ENCODE measurements at regions of chr1 and their contacts with region 1.

Region 1: GRCh38 chr1:111214074-111214801 is 13.3 kb upstream of the CHI3L2 start:
- DNase-seq: peak; percentile 81
- ATAC-seq: peak; percentile 23
- H3K4me3 ChIP-seq: no peak overlapping the region
- H3K27ac ChIP-seq: peak overlapping the region; percentile 100
- H3K4me1 ChIP-seq: peaks cover 62% of the 10 kb centered on the region
- H3K27me3 ChIP-seq: no peaks in the 10 kb centered on the region
- CTCF ChIP-seq: no peak
- EP300 ChIP-seq: no peak
- POLR2A ChIP-seq: no peak
- RAD21 ChIP-seq: 0 out of 2 replicates have a peak, but pooled peaks have one; percentile 1

Region 2: GRCh38 chr1:111127923-111128643 is 86.2 kb before region 1 on chr1:
- CTCF ChIA-PET with region 1: interaction called, 4 read pairs
- POLR2A ChIA-PET with region 1: interaction called, 11 read pairs
- RAD21 ChIA-PET with region 1: interaction called, 17 read pairs
- SMC1A ChIA-PET with region 1: interaction called, 21 read pairs
- in situ Hi-C with region 1: no loop called
- intact Hi-C with region 1: no loop called
- DNase-seq: peak; percentile 81
- ATAC-seq: peak; percentile 90
- H3K4me3 ChIP-seq: 0 out of 2 replicates have a peak overlapping the region, but pooled peaks have one; percentile 45
- H3K27ac ChIP-seq: peak overlapping the region; percentile 94
- H3K4me1 ChIP-seq: peaks cover 43% of the 10 kb centered on the region
- H3K27me3 ChIP-seq: no peaks in the 10 kb centered on the region
- CTCF ChIP-seq: no peak
- EP300 ChIP-seq: peak; percentile 26 to 54; a peak in 1 of 4 replicates
- POLR2A ChIP-seq: no peak
- RAD21 ChIP-seq: no peak

Region 3: GRCh38 chr1:111203681-111204200 is 10.5 kb before region 1 on chr1:
- CTCF ChIA-PET with region 1: interaction called, 239 read pairs
- POLR2A ChIA-PET with region 1: interaction called, 371 read pairs
- RAD21 ChIA-PET with region 1: interaction called, 542 read pairs
- SMC1A ChIA-PET with region 1: interaction called, 284 read pairs
- in situ Hi-C with region 1: no loop called
- intact Hi-C with region 1: loop called (anchors 1 kb)
- DNase-seq: peak; percentile 77
- ATAC-seq: peak; percentile 57
- H3K4me3 ChIP-seq: peak overlapping the region; percentile 87
- H3K27ac ChIP-seq: peak overlapping the region; percentile 92
- H3K4me1 ChIP-seq: peaks cover 39% of the 10 kb centered on the region
- H3K27me3 ChIP-seq: no peaks in the 10 kb centered on the region
- CTCF ChIP-seq: no peak
- EP300 ChIP-seq: peak; percentile 30 to 69; a peak in 3 of 4 replicates
- POLR2A ChIP-seq: peak; percentile 72; the same call in 1 of the 2 replicates
- RAD21 ChIP-seq: 0 out of 2 replicates have a peak, but pooled peaks have one; percentile 2

Region 4: DNA sequence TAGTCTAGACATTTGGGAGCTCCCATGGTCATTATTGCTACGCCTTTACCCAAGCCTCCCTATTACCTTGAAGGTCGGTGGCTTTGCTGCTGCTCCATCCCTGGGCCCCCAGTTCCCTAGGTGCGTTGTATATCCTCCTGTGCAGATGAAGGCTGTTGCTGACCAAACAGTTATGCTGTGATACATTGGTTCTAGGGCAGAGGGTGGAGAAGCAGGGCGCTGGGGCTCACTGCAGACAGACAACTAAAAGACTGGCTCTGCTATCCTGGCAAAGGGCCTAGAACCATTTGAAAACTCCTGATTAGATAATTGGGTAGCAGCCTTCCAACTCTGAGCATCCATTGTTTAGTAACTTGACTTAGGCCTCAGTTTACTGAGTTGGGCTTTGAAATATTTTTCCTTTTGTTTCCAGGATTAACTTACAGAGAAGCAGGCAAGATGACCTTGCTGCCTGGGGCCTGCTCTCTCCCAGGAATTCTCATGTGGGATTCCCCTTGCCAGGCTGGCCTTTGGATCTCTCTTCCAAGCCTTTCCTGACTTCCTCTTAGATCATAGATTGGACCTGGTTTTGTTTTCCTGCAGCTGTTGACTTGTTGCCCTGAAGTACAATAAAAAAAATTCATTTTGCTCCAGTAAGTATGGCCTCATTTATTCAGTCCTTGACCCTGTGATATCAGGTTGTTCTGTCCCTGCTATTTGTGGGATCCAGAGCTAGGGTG is 28.7 kb after region 1 on chr1:
- CTCF ChIA-PET with region 1: no interaction called
- POLR2A ChIA-PET with region 1: no interaction called
- RAD21 ChIA-PET with region 1: no interaction called
- SMC1A ChIA-PET with region 1: no interaction called
- in situ Hi-C with region 1: no loop called
- intact Hi-C with region 1: no loop called
- DNase-seq: no peak
- ATAC-seq: no peak
- H3K4me3 ChIP-seq: no peak overlapping the region
- H3K27ac ChIP-seq: no peak overlapping the region
- H3K4me1 ChIP-seq: no peaks in the 10 kb centered on the region
- H3K27me3 ChIP-seq: no peaks in the 10 kb centered on the region
- CTCF ChIP-seq: no peak
- EP300 ChIP-seq: no peak
- POLR2A ChIP-seq: no peak
- RAD21 ChIP-seq: no peak

Measured in GM12878 (cell line).